ENCODE measurements at regions of chr5 and their contacts with region 1.

Region 1: DNA sequence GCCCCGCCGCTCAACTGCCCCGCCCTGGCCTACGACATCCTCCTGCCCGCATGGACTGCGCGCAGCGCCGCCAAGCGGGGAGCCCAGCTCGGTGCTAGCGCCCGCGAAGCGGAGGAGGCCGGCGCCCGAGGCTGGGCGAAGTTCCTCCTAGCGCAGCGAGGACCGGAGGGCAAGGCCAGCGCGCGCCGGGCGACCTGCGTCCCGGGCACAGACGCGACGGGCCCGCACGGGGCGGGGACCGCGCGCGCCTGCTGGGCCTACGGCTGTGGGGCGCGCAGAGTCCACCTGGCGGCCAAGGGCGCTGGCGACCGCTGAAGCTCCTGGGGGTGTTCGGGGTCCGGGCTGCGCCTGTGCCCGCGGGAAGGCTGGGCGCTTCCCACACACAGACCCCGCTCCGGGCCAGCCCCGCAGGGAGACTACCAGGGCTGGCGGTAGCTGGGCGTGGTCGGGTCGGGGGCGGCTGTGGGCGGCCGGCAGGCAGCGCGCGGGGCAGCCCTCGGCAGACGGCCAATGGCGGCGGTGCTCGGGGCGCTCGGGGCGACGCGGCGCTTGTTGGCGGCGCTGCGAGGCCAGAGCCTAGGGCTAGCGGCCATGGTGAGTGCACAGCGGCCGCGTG is at the start of gene PCBD2:
- DNase-seq: peak; percentile 21
- H3K4me3 ChIP-seq: peak within 1 kb of the TSS; percentile 74
- CTCF ChIP-seq: peak; percentile 97

Region 2: GRCh38 chr5:134692722-134693121 is 212.0 kb before region 1 on chr5:
- CTCF ChIA-PET with region 1: no interaction called
- POLR2A ChIA-PET with region 1: no interaction called
- DNase-seq: no peak
- H3K4me3 ChIP-seq: no peak overlapping the region
- CTCF ChIP-seq: no peak

Region 3: GRCh38 chr5:134738133-134738962 is 166.4 kb before region 1 on chr5 and contains the start of gene CAMLG:
- CTCF ChIA-PET with region 1: interaction called, 49 read pairs
- POLR2A ChIA-PET with region 1: interaction called, 6 read pairs
- DNase-seq: peak; percentile 77
- H3K4me3 ChIP-seq: peak within 1 kb of the TSS; percentile 94
- CTCF ChIP-seq: peak; percentile 62

Region 4: GRCh38 chr5:134758504-134759341 is 146.0 kb before region 1 on chr5 and contains the start of gene DDX46:
- CTCF ChIA-PET with region 1: interaction called, 20 read pairs
- POLR2A ChIA-PET with region 1: no interaction called
- DNase-seq: peak; percentile 23
- H3K4me3 ChIP-seq: peak within 1 kb of the TSS; percentile 98
- CTCF ChIP-seq: peak; percentile 91

Region 5: DNA sequence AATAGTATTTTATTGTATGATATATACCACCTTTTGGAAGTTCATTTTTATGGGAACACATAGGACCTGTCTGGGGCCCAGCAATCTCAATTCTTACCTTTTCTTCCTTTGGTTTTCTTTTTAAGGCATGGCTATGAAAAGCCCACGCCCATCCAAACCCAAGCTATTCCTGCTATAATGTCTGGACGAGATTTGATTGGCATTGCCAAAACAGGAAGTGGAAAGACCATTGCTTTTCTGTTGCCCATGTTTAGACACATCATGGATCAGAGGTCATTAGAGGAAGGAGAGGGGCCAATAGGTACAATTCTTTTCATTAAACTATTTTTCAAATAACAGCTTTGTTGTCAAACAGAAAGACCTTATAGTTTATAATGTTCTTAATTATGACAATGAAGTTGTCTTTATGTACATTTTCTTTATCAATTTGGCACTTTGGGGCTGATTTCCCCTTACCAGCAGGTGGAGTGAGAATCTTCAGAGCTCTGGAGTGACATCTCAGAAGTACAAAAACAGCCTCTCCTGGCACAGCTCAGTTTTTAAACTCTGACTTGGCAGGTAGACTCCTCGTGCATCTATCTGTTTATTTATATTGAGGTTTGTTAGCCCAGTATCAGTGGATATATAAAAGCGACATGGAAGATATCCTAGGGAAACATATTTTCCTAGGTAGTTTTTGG is 120.4 kb before region 1 on chr5:
- CTCF ChIA-PET with region 1: interaction called, 16 read pairs
- POLR2A ChIA-PET with region 1: no interaction called
- DNase-seq: no peak
- H3K4me3 ChIP-seq: no peak overlapping the region
- CTCF ChIP-seq: peak; percentile 9

Region 6: DNA sequence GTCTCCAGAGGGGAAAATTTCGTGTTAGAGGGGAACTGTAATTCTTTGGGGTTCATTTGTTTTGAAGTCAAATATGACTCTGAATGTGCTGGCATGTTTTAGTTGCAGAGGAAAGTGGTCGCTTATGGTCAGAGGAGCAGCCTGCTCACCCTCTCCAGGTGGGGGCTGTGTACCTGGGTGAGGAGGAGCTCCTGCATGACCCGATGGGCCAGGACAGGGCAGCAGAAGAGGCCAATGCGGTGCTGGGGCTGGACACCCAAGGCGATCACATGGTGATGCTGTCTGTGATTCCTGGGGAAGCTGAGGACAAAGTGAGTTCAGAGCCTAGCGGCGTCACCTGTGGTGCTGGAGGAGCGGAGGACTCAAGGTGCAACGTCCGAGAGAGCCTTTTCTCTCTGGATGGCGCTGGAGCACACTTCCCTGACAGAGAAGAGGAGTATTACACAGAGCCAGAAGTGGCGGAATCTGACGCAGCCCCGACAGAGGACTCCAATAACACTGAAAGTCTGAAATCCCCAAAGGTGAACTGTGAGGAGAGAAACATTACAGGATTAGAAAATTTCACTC is 17.1 kb before region 1 on chr5:
- CTCF ChIA-PET with region 1: interaction called, 23 read pairs
- POLR2A ChIA-PET with region 1: no interaction called
- DNase-seq: no peak
- H3K4me3 ChIP-seq: no peak overlapping the region
- CTCF ChIP-seq: no peak

Region 7: DNA sequence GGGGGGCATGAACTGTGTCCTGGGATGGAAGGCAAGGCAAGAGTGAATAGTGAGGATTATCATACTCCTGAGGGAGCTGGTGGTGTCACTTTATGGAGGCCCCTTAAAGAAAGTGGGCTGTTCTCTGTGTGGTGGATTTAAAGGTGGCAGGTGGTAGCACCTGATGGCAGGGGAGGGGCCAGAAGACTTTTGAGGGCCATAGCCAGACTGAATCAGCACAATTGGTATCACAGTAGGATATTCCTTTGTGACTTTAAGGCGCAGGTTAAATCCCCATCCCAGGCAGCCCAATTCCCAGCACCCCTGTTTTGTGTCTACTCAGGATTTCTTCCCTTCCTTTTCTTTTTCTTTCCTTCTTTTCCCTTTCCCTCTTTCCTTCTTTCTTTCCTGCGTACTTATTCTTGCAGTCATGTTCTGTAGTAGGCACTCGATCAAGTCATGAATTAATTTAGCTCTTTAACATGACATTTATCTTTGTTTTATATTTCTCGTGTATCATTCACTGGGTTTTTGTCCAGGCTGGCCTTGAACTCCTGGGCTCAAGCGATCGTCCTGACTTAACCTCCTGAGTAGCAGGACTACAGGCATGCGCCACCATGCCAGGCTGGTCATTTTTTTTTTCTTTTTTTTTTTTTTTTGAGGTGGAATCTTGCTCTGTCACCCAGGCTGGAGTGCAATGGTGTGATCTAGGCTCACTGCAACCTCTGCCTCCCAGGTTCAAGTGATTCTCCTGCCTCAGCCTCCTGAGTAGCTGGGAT is 10.8 kb before region 1 on chr5:
- CTCF ChIA-PET with region 1: interaction called, 20 read pairs
- POLR2A ChIA-PET with region 1: no interaction called
- DNase-seq: no peak
- H3K4me3 ChIP-seq: no peak overlapping the region
- CTCF ChIP-seq: no peak

Region 8: DNA sequence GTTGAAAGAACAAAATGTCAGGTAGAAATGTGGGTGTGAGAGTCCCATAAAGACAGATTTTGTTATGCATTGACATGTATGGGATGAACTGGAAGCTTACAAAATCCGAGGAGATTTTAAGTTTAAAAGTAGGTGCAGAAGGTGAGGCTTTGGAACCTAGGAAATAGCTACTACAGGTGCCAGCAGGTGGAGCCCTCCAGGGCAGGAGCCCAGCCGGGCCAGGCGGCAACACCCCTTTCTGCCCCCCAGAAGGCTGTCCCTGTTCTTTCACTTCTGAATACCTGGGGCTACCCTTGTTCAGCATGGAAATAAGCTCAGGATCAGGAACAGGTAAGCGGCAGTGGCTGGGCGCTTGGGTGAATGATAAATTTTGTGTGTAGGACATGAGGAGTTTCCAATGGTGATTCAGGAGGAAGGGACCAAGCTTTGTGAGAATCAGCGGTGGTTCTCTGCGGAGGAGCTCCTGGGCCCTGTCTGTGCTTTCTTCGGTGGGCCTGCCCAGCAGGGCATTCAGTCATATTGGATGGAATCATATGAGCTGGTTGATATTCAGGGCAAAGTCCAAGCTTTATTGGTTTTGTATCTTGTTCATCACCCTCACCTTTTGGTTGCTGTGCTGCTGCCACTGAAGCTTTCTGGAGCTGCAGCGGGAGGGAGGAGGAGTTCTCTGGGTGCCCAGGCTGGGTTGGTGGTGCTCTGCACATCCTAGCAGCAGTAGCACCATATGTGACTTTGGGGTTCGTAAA is 12.5 kb after region 1 on chr5:
- CTCF ChIA-PET with region 1: interaction called, 33 read pairs
- POLR2A ChIA-PET with region 1: no interaction called
- DNase-seq: no peak
- H3K4me3 ChIP-seq: no peak overlapping the region
- CTCF ChIP-seq: no peak